Tibial artery (tissue), 4 donors: ENCODE measurements at regions of chr7 and their contacts with region 1.

Region 1: GRCh38 chr7:71131256-71132126 is 453 bp upstream of the GALNT17 start:
- DNase-seq: peak; percentile 27 to 80
- H3K4me3 ChIP-seq: peak overlapping the region; percentile 69 to 84
- H3K27ac ChIP-seq: peak overlapping the region; percentile 83 to 86
- H3K4me1 ChIP-seq: peaks cover 0 to 54% (median 27%) of the 10 kb centered on the region in 4 donors
- H3K27me3 ChIP-seq: no peaks in the 10 kb centered on the region
- CTCF ChIP-seq: peak in 1 of 2 experiments; percentile 22

Region 2: DNA sequence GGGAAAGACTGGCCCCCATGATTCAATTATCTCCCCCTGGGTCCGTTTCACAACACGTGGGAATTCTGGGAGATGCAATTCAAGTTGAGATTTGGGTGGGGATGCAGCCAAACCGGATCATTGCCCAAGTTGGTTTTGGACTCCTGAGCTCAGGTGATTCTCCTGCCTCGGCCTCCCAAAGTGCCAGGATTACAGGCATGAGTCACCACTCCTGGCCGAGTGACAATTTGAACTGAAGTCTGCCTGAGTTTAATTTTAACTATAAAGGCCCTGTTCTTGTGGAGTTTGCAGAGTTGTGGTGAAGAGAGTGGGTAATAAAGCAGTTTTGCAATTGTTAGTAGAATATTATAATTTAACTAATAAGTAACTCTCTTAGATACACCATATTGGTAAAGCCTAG is 78.7 kb after region 1 on chr7:
- intact Hi-C with region 1: loop called (anchors 10 kb)
- DNase-seq: no peak
- H3K4me3 ChIP-seq: no peak overlapping the region
- H3K27ac ChIP-seq: peak overlapping the region in 1 of 2 donors; percentile 11
- H3K4me1 ChIP-seq: peaks cover 0 to 29% (median 0%) of the 10 kb centered on the region in 4 donors
- H3K27me3 ChIP-seq: no peaks in the 10 kb centered on the region
- CTCF ChIP-seq: no peak

Region 3: GRCh38 chr7:72028267-72028666 is 896.8 kb after region 1 on chr7:
- intact Hi-C with region 1: no loop called
- DNase-seq: no peak
- H3K4me3 ChIP-seq: no peak overlapping the region
- H3K27ac ChIP-seq: no peak overlapping the region
- H3K4me1 ChIP-seq: no peaks in the 10 kb centered on the region
- H3K27me3 ChIP-seq: no peaks in the 10 kb centered on the region
- CTCF ChIP-seq: no peak